Calu3 (cell line): ENCODE measurements at regions of chr14 and their contacts with region 1.

Region 1: DNA sequence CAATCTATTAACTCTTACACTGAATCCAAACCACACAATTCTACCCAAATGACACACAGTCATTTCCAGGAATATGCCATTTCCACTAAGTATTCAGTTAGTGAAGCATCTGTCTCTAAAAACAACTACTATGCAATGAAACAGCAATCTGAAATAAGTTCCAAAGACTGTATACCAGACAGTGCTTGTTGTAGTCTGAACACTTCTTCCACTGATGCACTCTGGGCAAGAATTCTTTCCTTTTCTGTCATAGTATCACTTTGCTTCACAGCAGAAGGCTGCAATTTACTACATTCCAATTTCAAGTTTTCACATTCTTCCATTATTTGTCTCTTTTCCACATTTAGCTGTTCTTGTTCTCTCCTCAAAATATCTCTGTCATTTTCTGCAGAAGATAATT is 25.8 kb downstream of the TRIP11 start:
- DNase-seq: no peak
- H3K4me3 Mint-ChIP-seq: no peak overlapping the region
- H3K27ac Mint-ChIP-seq: no peak overlapping the region
- H3K4me1 Mint-ChIP-seq: no peaks in the 10 kb centered on the region
- H3K27me3 Mint-ChIP-seq: no peaks in the 10 kb centered on the region
- CTCF ChIP-seq: no peak

Region 2: GRCh38 chr14:91770185-91770584 is 243.9 kb before region 1 on chr14:
- CTCF ChIA-PET with region 1: no interaction called
- intact Hi-C with region 1: no loop called
- DNase-seq: no peak
- H3K4me3 Mint-ChIP-seq: no peak overlapping the region
- H3K27ac Mint-ChIP-seq: no peak overlapping the region
- H3K4me1 Mint-ChIP-seq: peaks cover 6% of the 10 kb centered on the region
- H3K27me3 Mint-ChIP-seq: no peaks in the 10 kb centered on the region
- CTCF ChIP-seq: no peak

Region 3: DNA sequence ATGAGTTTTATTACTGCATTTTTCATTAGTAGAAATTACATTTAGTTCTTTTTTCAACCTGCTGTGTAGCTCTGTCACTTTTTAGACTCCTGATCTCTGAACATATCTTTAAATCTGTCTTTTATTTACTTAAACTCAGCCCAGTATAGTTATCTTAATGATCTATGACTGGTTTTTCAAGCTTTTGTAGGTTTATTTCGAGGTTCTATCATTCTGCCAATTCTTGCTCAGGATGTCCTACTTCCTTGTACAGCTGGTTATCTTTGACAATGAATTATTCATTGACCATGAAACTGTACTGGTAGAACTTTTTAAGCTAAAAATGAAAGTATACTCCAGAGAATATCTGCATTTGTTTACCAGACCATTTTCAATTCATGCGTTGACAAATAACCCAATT is 184.6 kb before region 1 on chr14:
- CTCF ChIA-PET with region 1: no interaction called
- intact Hi-C with region 1: loop called (anchors 10 kb)
- DNase-seq: no peak
- H3K4me3 Mint-ChIP-seq: peak overlapping the region; percentile 47
- H3K27ac Mint-ChIP-seq: peak overlapping the region; percentile 79
- H3K4me1 Mint-ChIP-seq: peaks cover 73% of the 10 kb centered on the region
- H3K27me3 Mint-ChIP-seq: no peaks in the 10 kb centered on the region
- CTCF ChIP-seq: no peak

Region 4: DNA sequence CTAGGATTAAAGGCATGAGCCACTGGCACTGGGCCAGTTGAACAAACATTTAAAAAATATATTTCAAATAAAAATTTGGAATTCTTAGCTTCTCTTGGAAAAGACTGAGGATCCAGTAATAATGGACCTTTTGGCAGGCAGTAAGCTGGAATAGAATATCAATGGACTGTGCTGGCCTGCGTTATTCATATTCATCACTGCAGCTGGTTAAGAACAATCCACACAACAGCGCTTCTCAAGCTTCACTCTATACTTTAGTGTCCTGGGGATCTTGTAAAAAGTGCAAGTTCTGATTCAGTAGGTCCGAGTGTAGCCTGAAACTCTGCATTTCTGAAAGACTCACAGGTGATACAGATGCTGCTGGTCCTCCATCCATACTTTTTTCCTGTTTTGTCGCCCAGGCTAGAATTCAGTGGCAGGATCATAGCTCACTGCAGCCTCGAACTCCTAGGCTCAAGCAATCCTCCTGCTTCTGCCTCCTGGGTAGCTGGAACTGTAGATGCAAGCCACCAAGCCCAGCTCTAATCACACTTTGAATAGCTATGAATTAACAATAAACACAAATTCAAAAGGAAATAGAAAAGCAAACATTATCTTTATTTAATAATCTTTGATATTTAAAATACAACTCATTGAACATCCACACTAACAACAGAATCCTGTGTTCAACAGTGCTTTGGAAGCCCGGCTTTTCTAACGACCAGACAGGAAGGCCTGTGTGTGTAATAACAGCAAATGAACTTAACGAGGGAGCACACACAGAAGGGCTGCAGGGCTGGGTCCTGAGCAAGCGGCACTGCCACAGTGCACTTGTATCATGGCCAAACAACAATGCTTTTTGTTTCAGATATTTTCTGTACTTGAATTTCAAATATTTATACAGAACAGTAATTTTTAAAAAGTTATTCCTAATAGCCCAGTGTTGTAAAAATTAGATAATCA is 44.2 kb after region 1 on chr14:
- CTCF ChIA-PET with region 1: no interaction called
- intact Hi-C with region 1: no loop called
- DNase-seq: no peak
- H3K4me3 Mint-ChIP-seq: no peak overlapping the region
- H3K27ac Mint-ChIP-seq: no peak overlapping the region
- H3K4me1 Mint-ChIP-seq: no peaks in the 10 kb centered on the region
- H3K27me3 Mint-ChIP-seq: no peaks in the 10 kb centered on the region
- CTCF ChIP-seq: no peak

Region 5: GRCh38 chr14:92951912-92952471 is 938.0 kb after region 1 on chr14:
- CTCF ChIA-PET with region 1: no interaction called
- intact Hi-C with region 1: no loop called
- DNase-seq: peak; percentile 87
- H3K4me3 Mint-ChIP-seq: no peak overlapping the region
- H3K27ac Mint-ChIP-seq: no peak overlapping the region
- H3K4me1 Mint-ChIP-seq: peaks cover 8% of the 10 kb centered on the region
- H3K27me3 Mint-ChIP-seq: no peaks in the 10 kb centered on the region
- CTCF ChIP-seq: peak; percentile 89